ENCODE measurements at regions of chr6 and their contacts with region 1.

Region 1: DNA sequence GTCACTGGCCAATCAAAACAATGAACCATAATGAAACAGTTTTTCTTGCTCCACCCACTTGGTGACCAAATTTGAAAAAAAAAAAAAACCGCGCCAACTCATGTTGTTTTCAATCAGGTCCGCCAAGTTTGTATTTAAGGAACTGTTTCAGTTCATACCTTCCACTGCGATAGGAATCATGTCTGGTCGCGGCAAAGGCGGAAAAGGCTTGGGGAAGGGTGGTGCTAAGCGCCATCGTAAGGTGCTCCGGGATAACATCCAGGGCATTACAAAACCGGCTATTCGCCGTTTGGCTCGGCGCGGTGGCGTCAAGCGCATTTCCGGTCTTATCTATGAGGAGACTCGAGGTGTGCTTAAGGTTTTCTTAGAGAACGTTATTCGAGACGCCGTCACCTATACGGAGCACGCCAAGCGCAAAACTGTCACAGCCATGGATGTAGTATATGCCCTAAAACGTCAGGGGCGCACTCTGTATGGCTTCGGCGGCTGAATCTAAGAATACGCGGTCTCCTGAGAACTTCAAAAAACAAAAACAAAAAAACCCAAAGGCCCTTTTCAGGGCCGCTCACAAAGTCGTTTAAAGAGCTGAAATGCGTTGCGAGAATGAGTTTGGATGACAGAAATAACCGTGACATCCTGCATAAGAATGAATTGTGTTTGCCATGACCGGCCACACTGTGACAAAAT is 16.7 kb downstream of the HFE start:
- DNase-seq: peak; percentile 70

Region 2: GRCh38 chr6:26054857-26055669 is 48.9 kb before region 1 on chr6:
- CTCF ChIA-PET with region 1: interaction called, 3 read pairs
- POLR2A ChIA-PET with region 1: interaction called, 39 read pairs
- DNase-seq: peak; percentile 62

Region 3: DNA sequence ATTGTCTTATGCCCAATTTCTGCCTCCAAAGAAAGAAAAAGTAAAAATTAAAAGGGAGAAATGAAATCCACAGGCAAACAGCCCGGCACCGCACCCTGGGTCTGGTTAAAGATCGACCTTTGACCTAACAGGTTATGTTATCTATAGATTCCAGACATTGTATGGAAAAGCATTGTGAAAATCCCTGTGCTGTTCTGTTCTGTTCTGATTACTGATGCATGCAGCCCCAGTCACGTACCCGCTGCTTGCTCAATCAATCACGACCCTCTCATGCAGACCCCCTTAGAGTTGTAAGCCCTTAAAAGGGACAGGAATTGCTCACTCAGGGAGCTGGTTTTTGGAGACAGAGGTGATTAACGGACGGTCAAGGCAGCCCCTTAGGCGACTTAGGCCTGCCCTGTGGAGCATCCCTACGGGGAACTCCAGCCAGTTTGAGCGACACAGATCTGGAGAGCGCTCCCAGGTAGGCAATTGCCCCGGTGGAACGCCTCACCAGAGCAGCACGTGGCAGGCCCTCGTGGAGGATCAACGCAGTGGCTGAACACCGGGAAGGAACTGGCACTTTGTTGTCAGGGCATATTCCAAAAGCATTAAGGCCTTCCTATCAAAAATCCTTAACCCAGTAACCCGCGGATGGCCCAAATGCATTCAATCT is 28.7 kb before region 1 on chr6:
- CTCF ChIA-PET with region 1: no interaction called
- POLR2A ChIA-PET with region 1: no interaction called
- DNase-seq: no peak

Measured in HEK293T (cell line).